BJ (cell line): ENCODE measurements at regions of chr2 and their contacts with region 1.

Region 1: DNA sequence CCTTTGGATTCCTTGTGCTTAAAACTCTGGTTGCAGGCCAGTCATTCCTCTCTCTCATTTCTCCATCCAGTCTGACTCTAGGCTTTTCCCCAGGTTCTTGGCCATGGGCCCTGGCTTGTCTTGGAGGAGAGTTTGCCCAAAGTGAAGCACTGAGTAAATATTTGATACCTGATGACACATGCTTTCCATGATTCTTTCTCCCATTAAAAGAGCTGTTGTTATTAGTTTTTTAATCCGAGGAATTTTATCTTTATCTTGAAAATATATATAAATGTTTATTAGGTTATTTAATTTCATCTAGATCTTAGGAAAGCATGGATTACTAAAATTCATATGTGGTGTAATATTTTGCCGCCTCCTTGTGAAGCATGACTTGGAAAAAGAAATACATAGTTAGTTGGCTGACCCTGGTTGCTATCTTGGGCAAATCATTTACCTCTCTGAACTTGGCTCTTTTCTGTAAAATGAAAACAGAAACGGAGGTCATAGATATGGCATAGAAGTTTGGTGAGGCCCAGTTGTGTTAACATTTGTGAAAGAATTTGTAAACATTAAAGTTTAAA is 650.1 kb downstream of the SLC4A3 start:
- DNase-seq: peak; percentile 83
- H3K4me3 ChIP-seq: no peak overlapping the region
- H3K27me3 ChIP-seq: no peaks in the 10 kb centered on the region
- CTCF ChIP-seq: no peak

Region 2: DNA sequence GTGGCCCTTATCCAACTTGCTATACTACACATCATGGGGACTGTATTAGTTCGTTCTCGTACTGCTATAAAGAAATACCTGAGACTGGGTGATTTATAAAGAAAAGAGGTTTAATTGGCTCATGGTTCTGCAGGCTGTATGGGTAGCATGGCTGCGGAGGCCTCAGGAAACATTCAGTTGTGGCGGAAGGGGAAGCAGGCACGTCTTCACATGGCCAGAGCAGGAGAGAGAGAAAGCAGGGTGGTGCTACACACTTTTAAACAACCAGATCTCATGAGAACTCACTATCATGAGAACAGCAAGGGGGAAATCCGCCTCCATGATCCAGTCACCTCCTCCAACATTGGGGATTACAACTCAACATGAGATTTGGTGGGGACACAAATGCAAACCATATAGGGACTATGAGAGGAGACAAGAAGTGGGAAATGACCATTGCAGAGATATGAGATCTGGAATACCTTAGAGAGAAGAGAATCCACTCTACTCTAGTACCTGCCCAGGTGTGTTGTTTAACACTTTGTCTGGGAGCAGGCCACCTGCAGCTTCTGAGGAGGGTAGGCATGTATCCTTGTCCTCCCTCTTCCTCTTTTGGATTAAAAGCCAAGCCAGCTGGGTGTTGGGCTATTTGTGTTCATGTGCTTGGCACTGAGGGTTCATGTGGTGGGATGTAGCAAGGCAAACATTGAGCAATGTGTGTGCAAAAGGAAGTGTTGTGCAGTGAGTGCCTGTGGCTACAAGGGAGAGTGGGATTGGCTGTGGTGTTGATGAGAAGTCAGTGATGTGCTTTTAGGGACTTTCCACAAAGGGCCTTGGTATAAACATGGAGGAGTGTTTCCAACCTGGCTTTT is 1544.1 kb before region 1 on chr2:
- CTCF ChIA-PET with region 1: no interaction called
- POLR2A ChIA-PET with region 1: interaction called, 13 read pairs
- DNase-seq: no peak
- H3K4me3 ChIP-seq: no peak overlapping the region
- H3K27me3 ChIP-seq: no peaks in the 10 kb centered on the region
- CTCF ChIP-seq: no peak

Region 3: DNA sequence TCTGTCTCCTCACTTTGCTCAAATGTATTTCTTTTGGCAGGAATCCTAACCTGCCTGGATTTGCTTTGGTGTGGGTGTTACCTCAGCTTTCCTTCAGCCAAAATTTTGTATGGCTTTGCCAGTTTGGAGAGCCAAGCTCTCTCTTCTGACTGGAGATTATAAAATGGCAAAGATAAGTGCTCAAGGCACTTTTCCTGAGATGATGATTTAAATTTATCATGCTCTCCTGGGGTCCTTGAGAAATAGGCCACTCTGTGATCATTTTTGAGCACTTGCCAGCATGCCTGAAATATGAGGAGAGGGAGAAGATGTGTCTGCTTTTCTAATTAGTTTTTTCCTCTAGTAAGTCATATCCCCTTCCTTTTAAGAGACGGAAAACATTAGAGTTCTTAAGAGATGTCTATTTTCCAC is 32.9 kb after region 1 on chr2:
- CTCF ChIA-PET with region 1: no interaction called
- POLR2A ChIA-PET with region 1: no interaction called
- DNase-seq: no peak
- H3K4me3 ChIP-seq: no peak overlapping the region
- H3K27me3 ChIP-seq: no peaks in the 10 kb centered on the region
- CTCF ChIP-seq: no peak